Left cardiac atrium (tissue), 4 donors: ENCODE measurements at regions of chr9 and their contacts with region 1.

Region 1: DNA sequence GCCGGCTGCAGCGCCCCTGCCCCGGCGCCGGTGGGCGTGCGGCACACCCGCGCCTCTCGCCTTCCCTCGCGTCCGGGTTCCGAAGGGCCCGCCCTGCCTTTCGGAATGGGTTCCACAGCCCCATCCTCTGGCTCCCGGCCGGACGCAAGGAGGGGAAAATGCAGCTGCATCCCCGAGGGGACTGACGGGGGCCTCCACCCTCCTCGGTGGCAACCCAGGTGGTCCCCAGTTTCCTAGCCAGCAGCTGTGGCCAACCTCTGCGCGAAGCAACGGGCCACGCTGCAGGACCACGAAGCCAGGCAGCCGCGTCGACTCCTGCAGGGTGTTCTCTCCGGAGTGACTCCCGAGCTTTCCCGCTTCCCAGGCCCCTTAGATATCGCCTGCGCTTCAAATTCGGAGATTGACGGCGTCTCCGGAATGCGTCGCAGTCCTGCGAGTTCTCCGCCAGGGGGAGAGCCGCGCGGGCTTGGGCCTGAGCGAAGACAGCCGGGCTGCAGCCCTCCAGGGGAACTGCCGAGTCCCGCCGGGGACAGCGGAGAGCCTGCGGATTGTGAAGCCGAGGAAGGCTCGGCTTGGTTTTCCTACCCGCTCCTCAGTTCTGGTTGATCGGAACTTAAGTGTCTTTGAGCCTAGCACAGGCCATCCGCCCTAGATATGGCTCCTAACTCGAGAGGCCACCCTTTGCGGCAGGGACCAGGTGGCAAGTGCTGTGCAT is 582 bp upstream of the APBA1 start:
- DNase-seq: peak; percentile 90
- ATAC-seq: peak; percentile 87 to 89

Region 2: DNA sequence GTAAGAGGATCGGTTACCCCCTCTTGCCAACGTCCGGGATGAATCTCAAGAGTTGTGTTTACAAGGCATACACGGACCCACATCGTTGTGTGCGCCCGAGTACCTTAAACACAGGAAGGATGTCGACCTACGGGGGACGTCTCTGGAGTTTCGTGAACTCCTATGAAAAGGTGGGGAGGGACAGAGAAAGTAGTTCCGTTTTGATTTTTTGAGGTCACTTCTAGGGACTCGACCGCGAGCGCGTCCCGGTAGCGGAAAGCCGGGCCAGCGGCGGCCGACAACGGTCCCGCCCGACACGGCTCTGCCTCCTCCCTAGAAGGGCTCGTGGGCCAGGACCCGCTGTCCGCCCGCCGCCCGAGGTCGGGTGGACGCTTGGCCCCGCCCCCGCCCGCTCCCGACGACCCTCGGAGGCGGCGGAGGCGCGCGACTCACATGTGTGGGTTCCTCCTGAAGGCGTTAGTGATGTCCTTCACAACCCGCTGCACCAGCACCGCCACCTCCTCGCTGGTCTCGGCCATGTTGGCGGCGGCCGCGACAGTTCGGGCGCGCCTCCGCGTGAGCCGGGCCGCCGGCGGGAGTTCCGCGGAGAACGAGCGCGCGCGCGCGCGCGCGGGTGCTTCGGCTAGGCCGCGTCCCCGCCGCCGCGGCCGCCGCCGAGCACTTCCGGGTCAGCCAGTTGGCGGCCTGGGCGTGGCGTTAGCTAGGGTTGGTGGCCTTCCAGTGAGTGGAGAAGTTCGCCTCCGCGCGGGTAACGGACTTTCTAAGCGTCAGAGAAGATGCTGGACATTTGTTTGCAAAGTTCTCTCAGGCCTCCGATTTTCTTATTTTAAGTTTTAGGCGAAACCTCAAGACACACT is 86.9 kb after region 1 on chr9 and contains the start of gene PTAR1:
- intact Hi-C with region 1: loop called (anchors 5 to 10 kb)
- DNase-seq: peak; percentile 94
- ATAC-seq: peak; percentile 98
- total RNA-seq, gene PTAR1: 31.1 to 34.5 TPM

Region 3: GRCh38 chr9:69885474-69885929 is 212.7 kb after region 1 on chr9:
- intact Hi-C with region 1: loop called in 1 of 2 experiments (anchors 5 kb)
- DNase-seq: no peak
- ATAC-seq: no peak

Region 4: GRCh38 chr9:69919461-69920061 is 246.8 kb after region 1 on chr9:
- intact Hi-C with region 1: loop called in 1 of 2 experiments (anchors 5 kb)
- DNase-seq: no peak
- ATAC-seq: peak; percentile 84 to 86